ENCODE measurements at regions of chr3 and their contacts with region 1.

Region 1: GRCh38 chr3:39459026-39459425 is 8.5 kb upstream of the MOBP start:
- DNase-seq: no peak
- ATAC-seq: no peak
- H3K4me3 ChIP-seq: no peak overlapping the region
- H3K4me3 Mint-ChIP-seq: no peak overlapping the region
- H3K27ac ChIP-seq: no peak overlapping the region
- H3K27ac Mint-ChIP-seq: no peak overlapping the region
- H3K4me1 ChIP-seq: no peaks in the 10 kb centered on the region
- H3K4me1 Mint-ChIP-seq: no peaks in the 10 kb centered on the region
- H3K27me3 ChIP-seq: no peaks in the 10 kb centered on the region
- H3K27me3 Mint-ChIP-seq: peaks cover 31% of the 10 kb centered on the region
- CTCF ChIP-seq: no peak

Region 2: DNA sequence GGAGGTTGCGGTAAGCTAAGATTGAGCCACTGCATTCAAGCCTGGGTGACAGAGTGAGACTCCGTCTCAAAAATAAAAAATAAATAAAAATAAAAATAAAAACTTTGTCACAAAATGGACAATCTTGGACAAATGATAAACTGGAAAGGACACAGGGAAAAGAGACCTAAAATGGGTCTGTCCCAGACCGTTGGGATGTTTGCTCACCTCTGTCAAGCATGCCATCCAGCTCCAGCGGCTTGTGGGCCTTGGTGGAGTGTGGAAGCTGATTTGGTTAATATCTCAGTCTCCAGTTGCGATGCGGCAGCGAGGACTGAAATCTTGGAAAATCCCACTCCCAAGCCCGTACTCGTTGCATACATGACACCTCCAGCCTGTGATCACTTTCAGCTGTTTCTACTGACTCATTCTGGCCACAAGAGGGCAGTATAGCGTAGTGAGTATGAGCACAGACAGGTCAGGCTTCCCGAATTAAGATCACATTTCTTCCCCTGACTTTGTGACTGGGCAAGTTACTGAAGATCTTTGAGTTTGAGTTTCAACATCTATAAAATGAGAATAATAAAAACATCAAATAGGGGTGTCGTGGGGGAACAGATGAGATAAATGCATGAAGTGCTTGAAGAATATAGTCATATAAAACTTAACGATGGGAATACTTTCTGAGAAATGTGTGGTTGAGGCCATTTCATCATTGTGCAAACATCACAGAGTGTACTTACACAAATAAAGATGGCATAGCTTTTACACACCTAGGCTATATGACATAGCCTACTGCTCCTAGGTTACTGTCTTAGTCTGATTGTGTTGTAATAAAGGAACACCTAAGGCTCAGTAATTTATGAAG is 11.2 kb before region 1 on chr3:
- CTCF ChIA-PET with region 1: interaction called, 11 read pairs
- POLR2A ChIA-PET with region 1: no interaction called
- intact Hi-C with region 1: no loop called
- DNase-seq: peak; percentile 77
- ATAC-seq: peak; percentile 54
- H3K4me3 ChIP-seq: no peak overlapping the region
- H3K4me3 Mint-ChIP-seq: no peak overlapping the region
- H3K27ac ChIP-seq: no peak overlapping the region
- H3K27ac Mint-ChIP-seq: no peak overlapping the region
- H3K4me1 ChIP-seq: no peaks in the 10 kb centered on the region
- H3K4me1 Mint-ChIP-seq: peaks cover 2% of the 10 kb centered on the region
- H3K27me3 ChIP-seq: peaks cover 0 to 4% (median 2%) of the 10 kb centered on the region in 4 experiments
- H3K27me3 Mint-ChIP-seq: peaks cover 5% of the 10 kb centered on the region
- CTCF ChIP-seq: peak; percentile 95

Region 3: DNA sequence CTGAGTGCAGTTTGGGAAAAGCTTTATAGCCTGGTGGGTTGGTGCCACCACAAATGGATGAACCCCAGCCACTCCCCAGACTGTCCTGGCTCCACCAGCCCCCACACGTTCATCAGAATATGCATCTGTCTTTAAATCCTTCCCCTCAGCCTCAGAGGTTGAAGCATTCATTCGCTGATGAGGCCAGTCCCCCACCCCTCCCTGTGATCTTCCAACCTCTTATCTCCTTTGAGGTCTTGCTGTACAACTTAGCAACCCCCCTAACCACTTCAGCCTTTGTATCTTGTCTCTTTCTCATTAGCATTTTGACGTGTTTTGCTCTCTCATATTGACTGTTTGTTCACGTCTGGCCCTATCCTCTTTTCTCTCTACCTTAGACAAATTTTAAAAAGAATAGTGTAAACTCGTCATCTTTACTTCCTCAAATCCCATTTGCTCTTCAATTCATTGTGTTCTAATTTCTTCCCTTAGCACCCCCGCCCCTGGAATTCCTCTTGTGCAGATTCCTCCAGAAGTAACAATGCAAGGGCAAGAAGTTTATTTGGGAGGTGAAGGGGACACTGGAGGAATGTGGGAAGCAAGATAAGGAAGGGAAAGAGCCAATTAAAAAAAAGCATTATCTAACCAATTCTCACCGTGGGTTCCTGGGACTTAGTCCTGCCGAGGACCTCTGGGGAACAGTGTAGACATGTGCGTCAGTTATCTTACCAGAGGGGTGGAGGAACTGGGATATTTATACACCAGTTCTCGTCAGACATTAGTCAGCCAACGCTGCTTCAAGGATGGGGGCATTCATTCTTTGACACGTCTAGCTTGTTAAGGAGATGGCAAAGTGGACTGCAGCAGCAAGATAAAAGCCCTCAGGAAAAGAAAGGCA is 47.1 kb after region 1 on chr3:
- CTCF ChIA-PET with region 1: no interaction called
- POLR2A ChIA-PET with region 1: no interaction called
- intact Hi-C with region 1: no loop called
- DNase-seq: no peak
- ATAC-seq: no peak
- H3K4me3 ChIP-seq: no peak overlapping the region
- H3K4me3 Mint-ChIP-seq: no peak overlapping the region
- H3K27ac ChIP-seq: no peak overlapping the region
- H3K27ac Mint-ChIP-seq: no peak overlapping the region
- H3K4me1 ChIP-seq: no peaks in the 10 kb centered on the region
- H3K4me1 Mint-ChIP-seq: no peaks in the 10 kb centered on the region
- H3K27me3 ChIP-seq: peaks cover 0 to 9% (median 7%) of the 10 kb centered on the region in 4 experiments
- H3K27me3 Mint-ChIP-seq: peaks cover 30% of the 10 kb centered on the region
- CTCF ChIP-seq: no peak

Region 4: DNA sequence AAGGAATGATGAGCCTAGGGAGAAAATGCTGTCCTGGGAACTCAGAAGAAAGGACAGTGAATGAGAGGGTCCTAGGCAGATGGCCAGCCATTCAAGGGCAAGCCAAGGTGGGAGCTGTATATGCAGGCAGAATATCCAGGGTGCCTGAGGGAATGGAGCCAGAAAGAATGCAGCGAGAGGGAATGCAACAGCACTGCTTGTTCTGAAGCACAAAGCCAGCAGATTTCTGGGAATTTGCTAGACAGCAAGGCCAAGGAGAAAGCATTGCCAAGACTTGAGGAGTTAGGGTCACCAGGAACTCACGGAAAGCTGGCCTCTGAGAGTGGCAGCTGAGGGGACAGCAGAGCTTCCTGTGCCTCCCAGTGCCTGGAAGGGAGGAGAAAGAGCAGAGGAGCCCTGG is 551.0 kb after region 1 on chr3:
- CTCF ChIA-PET with region 1: no interaction called
- POLR2A ChIA-PET with region 1: no interaction called
- intact Hi-C with region 1: no loop called
- DNase-seq: no peak
- ATAC-seq: no peak
- H3K4me3 ChIP-seq: no peak overlapping the region
- H3K4me3 Mint-ChIP-seq: no peak overlapping the region
- H3K27ac ChIP-seq: no peak overlapping the region
- H3K27ac Mint-ChIP-seq: no peak overlapping the region
- H3K4me1 ChIP-seq: no peaks in the 10 kb centered on the region
- H3K4me1 Mint-ChIP-seq: no peaks in the 10 kb centered on the region
- H3K27me3 ChIP-seq: peaks cover 0 to 3% (median 0%) of the 10 kb centered on the region in 4 experiments
- H3K27me3 Mint-ChIP-seq: peaks cover 5% of the 10 kb centered on the region
- CTCF ChIP-seq: no peak